GM12878 (cell line): ENCODE measurements at regions of chr12 and their contacts with region 1.

Region 1: DNA sequence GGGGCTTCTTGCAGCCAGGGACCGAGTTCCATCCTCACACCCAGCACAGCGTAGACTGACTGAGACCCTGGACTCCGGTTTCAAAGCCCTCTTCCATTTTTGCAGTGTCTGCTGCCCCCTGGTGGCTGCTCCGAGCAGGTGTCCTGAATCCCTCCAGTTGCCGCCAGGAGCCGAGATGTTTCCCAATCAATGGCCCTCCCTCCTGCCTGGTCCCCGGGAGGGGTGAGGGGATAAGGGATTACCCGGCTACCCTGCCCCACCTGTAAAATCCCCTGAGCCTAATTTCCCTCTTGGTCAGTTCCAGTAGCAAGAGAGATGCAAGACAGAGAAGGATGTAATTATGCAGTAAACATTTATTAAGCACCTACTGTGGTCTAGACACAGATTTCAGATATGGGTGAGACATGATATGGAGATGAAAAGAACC is 55.0 kb downstream of the PHETA1 start:
- DNase-seq: no peak
- ATAC-seq: peak; percentile 85
- H3K4me3 ChIP-seq: no peak overlapping the region
- H3K27ac ChIP-seq: no peak overlapping the region
- H3K4me1 ChIP-seq: no peaks in the 10 kb centered on the region
- H3K27me3 ChIP-seq: no peaks in the 10 kb centered on the region
- CTCF ChIP-seq: peak; percentile 86 to 92 (median 90)
- EP300 ChIP-seq: no peak
- POLR2A ChIP-seq: no peak
- RAD21 ChIP-seq: peak; percentile 78

Region 2: GRCh38 chr12:110932046-110932445 is 381.8 kb before region 1 on chr12:
- CTCF ChIA-PET with region 1: no interaction called
- POLR2A ChIA-PET with region 1: no interaction called
- RAD21 ChIA-PET with region 1: no interaction called
- SMC1A ChIA-PET with region 1: no interaction called
- in situ Hi-C with region 1: loop called (anchors 5 kb)
- intact Hi-C with region 1: loop called (anchors 1 kb)
- DNase-seq: no peak
- ATAC-seq: no peak
- H3K4me3 ChIP-seq: no peak overlapping the region
- H3K27ac ChIP-seq: no peak overlapping the region
- H3K4me1 ChIP-seq: no peaks in the 10 kb centered on the region
- H3K27me3 ChIP-seq: no peaks in the 10 kb centered on the region
- CTCF ChIP-seq: peak; percentile 18 to 38 (median 28); a peak in 3 of 6 replicates
- EP300 ChIP-seq: no peak
- POLR2A ChIP-seq: no peak
- RAD21 ChIP-seq: 0 out of 2 replicates have a peak, but pooled peaks have one; percentile 9

Region 3: GRCh38 chr12:110937104-110937641 is 376.7 kb before region 1 on chr12:
- CTCF ChIA-PET with region 1: interaction called, 3 read pairs
- POLR2A ChIA-PET with region 1: no interaction called
- RAD21 ChIA-PET with region 1: no interaction called
- SMC1A ChIA-PET with region 1: no interaction called
- in situ Hi-C with region 1: loop called (anchors 5 kb)
- intact Hi-C with region 1: loop called (anchors 1 kb)
- DNase-seq: no peak
- ATAC-seq: peak; percentile 77
- H3K4me3 ChIP-seq: no peak overlapping the region
- H3K27ac ChIP-seq: no peak overlapping the region
- H3K4me1 ChIP-seq: peaks cover 3% of the 10 kb centered on the region; the same call in 1 of the 2 replicates
- H3K27me3 ChIP-seq: no peaks in the 10 kb centered on the region
- CTCF ChIP-seq: peak; percentile 92 to 95 (median 94)
- EP300 ChIP-seq: no peak
- POLR2A ChIP-seq: no peak
- RAD21 ChIP-seq: peak; percentile 89